PC-9 (cell line): ENCODE measurements at regions of chr11 and their contacts with region 1.

Region 1: GRCh38 chr11:108697872-108698473 is 33.1 kb downstream of the DDX10 start:
- DNase-seq: peak in 1 of 2 experiments; percentile 32
- H3K4me3 ChIP-seq: no peak overlapping the region
- H3K27ac ChIP-seq: no peak overlapping the region
- H3K4me1 ChIP-seq: no peaks in the 10 kb centered on the region
- H3K27me3 ChIP-seq: no peaks in the 10 kb centered on the region
- CTCF ChIP-seq: peak; percentile 93

Region 2: GRCh38 chr11:107372439-107372838 is 1325.5 kb before region 1 on chr11:
- CTCF ChIA-PET with region 1: no interaction called
- POLR2A ChIA-PET with region 1: no interaction called
- intact Hi-C with region 1: no loop called
- DNase-seq: no peak
- H3K4me3 ChIP-seq: no peak overlapping the region
- H3K27ac ChIP-seq: no peak overlapping the region
- H3K4me1 ChIP-seq: peaks cover 9% of the 10 kb centered on the region
- H3K27me3 ChIP-seq: no peaks in the 10 kb centered on the region
- CTCF ChIP-seq: no peak

Region 3: DNA sequence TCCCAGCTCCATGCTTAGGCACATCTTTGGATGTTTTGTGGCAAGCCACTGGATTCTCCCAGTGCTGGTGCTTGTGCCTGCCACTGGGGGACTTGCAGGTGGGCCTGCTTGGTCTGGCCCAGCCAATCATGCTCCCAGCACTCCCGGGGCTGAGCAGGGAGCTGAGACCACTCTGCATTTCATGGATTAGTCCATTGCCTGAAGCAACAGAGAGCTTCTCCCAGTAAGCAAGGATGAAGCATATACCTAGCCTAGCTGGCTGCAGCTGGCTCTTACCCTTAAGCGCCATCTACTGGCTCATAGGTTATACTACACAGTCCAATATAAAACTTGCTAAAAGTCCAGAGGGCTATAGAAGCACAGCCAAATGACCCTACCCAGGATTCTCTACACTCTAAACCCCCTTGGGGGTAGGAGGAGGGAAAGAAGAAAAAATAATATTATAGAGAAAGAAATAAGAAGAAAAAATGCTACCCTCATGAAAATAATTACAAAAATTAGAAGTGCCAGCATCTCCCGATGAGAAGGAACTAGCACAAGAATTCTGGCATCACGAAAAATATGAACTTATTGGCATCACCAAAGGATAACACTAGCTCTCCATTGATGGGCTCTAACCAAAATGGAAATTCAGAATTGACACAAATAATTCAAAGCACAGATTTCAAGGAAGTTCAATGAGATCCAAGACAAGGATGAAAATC is 999.3 kb after region 1 on chr11:
- CTCF ChIA-PET with region 1: no interaction called
- POLR2A ChIA-PET with region 1: no interaction called
- intact Hi-C with region 1: loop called (anchors 2 kb)
- DNase-seq: peak in 1 of 2 experiments; percentile 3
- H3K4me3 ChIP-seq: no peak overlapping the region
- H3K27ac ChIP-seq: no peak overlapping the region
- H3K4me1 ChIP-seq: no peaks in the 10 kb centered on the region
- H3K27me3 ChIP-seq: no peaks in the 10 kb centered on the region
- CTCF ChIP-seq: peak; percentile 93

Region 4: DNA sequence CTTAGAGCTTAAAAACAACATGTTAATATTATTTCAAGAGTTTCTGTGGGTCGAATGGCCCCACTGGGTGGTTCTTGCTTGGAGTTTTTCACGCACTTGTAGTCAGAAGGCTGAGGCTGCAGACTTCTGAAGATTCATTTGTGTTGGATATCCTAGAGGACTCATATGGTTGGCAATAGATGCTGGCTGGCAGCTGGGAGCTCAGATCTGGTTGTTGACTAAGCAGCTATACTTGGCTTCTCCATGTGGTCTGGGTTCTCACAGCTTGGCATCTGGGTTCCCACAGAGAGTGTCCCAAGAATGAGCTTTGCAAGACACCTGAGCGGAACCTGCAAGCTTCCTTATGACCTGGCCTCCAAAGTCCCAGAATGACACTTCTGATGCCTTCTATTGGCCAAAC is 1231.3 kb after region 1 on chr11:
- CTCF ChIA-PET with region 1: no interaction called
- POLR2A ChIA-PET with region 1: interaction called, 13 read pairs
- intact Hi-C with region 1: no loop called
- DNase-seq: no peak
- H3K4me3 ChIP-seq: no peak overlapping the region
- H3K27ac ChIP-seq: no peak overlapping the region
- H3K4me1 ChIP-seq: no peaks in the 10 kb centered on the region
- H3K27me3 ChIP-seq: no peaks in the 10 kb centered on the region
- CTCF ChIP-seq: no peak